Activated CD4-positive, alpha-beta T cell treated with anti-CD3 and anti-CD28 coated beads, Interleukin-2, amount 10 ng/mL, durations not matched to agents 24 days and 14 days (primary cell): ENCODE measurements at regions of chr5 and their contacts with region 1.

Region 1: GRCh38 chr5:154754460-154755360 is 467 bp upstream of the LARP1 start:
- DNase-seq: peak; percentile 100
- H3K4me3 Mint-ChIP-seq: peak overlapping the region; percentile 92
- H3K27ac Mint-ChIP-seq: peak overlapping the region; percentile 99
- H3K4me1 Mint-ChIP-seq: peaks cover 38% of the 10 kb centered on the region
- H3K27me3 Mint-ChIP-seq: no peaks in the 10 kb centered on the region

Region 2: GRCh38 chr5:154189819-154190594 is 564.7 kb before region 1 on chr5:
- intact Hi-C with region 1: loop called (anchors 5 kb)
- DNase-seq: peak; percentile 95
- H3K4me3 Mint-ChIP-seq: peak overlapping the region; percentile 89
- H3K27ac Mint-ChIP-seq: peak overlapping the region; percentile 77
- H3K4me1 Mint-ChIP-seq: peaks cover 41% of the 10 kb centered on the region
- H3K27me3 Mint-ChIP-seq: peaks cover 5% of the 10 kb centered on the region

Region 3: DNA sequence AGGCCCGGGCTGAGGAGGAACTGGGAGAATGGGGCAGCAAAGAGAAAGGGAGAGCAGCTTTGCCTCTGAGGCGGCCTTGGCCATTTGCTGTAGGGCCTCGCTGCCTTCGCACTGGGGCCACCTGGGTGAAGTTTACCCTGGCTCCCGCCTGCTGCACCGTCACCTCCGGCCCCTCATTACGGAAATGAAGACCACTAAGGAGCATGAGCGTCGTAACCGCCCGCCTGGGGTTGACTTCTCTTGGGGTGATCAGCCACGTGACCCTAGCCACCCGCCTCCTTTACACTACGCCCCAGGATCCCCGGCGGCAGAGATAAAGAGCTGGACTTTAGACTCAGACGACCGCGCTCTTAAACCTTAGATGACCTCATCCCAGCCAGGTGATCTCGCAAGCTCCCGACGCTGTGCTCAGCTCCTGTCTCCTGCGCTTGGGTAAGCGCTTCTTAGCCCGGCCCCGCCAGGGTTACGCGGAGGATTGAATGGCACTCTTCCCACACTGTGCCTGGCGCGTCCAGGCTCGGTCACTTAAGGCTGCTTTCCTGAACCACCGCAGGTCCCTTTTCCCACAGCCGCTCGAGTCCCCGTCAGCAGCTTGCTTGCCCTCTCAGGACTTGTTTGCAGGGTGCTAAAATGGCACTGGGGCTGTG is 107.5 kb before region 1 on chr5:
- intact Hi-C with region 1: loop called (anchors 2 kb)
- DNase-seq: peak; percentile 61
- H3K4me3 Mint-ChIP-seq: peak overlapping the region; percentile 74
- H3K27ac Mint-ChIP-seq: no peak overlapping the region
- H3K4me1 Mint-ChIP-seq: peaks cover 14% of the 10 kb centered on the region
- H3K27me3 Mint-ChIP-seq: peaks cover 37% of the 10 kb centered on the region

Region 4: GRCh38 chr5:154740483-154740882 is 14.2 kb before region 1 on chr5:
- intact Hi-C with region 1: no loop called
- DNase-seq: no peak
- H3K4me3 Mint-ChIP-seq: no peak overlapping the region
- H3K27ac Mint-ChIP-seq: no peak overlapping the region
- H3K4me1 Mint-ChIP-seq: no peaks in the 10 kb centered on the region
- H3K27me3 Mint-ChIP-seq: no peaks in the 10 kb centered on the region

Region 5: DNA sequence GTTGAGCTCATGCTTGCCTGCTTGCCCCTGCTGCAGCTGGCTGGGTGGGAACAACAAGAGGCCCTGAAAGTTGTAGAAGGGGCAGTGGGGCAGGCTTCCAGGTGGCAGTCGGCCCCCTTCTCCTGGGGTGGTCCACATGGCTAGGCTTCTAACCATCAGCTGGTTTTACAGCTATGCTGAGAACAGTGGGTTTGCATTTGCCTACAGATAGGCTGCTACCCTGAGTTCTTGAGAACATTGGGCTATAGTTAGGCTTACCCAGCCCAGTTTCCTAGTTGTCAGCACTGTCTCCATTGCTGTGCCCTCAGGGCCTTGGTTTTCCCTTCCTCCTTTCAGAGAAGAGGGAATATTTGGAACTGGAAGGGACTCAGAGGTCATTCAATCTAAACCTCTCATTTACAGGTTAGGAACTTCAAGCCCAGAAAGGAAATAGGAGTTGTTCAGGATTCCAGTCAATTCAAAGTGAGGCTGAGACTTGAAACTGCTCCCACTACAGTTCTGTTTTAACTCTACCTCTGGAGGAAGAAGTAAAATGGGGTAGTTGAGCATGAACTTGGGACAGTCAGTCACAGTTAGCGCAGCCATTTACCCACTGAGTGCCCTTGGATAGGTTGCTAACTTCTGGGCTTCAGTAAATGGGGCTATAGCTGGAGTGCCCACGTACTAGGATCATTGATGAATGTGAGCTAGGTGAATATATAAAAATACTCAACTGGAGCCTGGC is 12.0 kb after region 1 on chr5:
- intact Hi-C with region 1: loop called (anchors 1 kb)
- DNase-seq: no peak
- H3K4me3 Mint-ChIP-seq: peak overlapping the region; percentile 39
- H3K27ac Mint-ChIP-seq: peak overlapping the region; percentile 58
- H3K4me1 Mint-ChIP-seq: peaks cover 67% of the 10 kb centered on the region
- H3K27me3 Mint-ChIP-seq: no peaks in the 10 kb centered on the region

Region 6: GRCh38 chr5:154857530-154858296 is 103.0 kb after region 1 on chr5:
- intact Hi-C with region 1: loop called (anchors 1 kb)
- DNase-seq: peak; percentile 96
- H3K4me3 Mint-ChIP-seq: peak overlapping the region; percentile 100
- H3K27ac Mint-ChIP-seq: peak overlapping the region; percentile 98
- H3K4me1 Mint-ChIP-seq: peaks cover 29% of the 10 kb centered on the region
- H3K27me3 Mint-ChIP-seq: no peaks in the 10 kb centered on the region